WTC11 (cell line): ENCODE measurements at regions of chr17 and their contacts with region 1.

Region 1: DNA sequence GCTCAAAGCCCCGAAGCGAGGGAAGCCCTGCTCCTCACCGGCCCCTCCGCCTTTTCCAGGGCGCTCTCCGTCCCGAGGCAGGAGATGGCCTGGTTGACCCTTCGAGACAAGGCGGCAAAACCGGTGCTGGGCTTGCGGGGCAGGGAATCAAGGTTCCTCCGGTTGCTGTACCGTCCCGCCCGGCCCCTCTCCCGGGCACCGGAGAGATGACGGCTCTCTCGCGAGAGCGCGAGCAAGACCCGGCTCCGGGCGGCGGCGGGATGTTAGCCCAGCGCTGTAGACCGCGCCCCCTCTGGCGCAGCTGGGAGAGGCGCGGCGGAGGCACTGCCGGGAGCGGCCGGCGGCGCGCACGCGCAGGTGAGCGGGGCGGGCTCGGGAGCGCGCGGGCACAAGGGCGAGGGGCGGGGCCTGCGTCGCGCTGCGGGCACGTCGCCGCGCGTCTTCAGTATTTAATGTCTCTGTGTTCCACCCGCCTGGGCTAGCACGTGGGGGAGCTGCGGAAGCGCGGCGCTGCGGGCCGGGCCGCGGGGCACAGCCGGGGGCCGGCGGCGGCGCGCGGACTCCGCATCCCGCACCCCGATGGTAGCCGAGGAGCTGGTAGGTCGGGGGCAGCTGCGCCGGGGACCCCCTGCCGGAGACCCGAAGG is at the start of gene AKAP1:
- DNase-seq: peak; percentile 96
- ATAC-seq: peak; percentile 96
- H3K4me3 Mint-ChIP-seq: peak within 1 kb of the TSS; percentile 88
- H3K27ac Mint-ChIP-seq: peak within 1 kb of the TSS; percentile 98
- H3K4me1 Mint-ChIP-seq: peaks cover 53% of the 10 kb centered on the region
- H3K27me3 Mint-ChIP-seq: peaks cover 2% of the 10 kb centered on the region; the same call in 1 of the 2 replicates
- CTCF ChIP-seq: no peak
- total RNA-seq, gene AKAP1: 55.9 to 74.5 TPM (median 56.2 TPM) in 3 replicates

Region 2: DNA sequence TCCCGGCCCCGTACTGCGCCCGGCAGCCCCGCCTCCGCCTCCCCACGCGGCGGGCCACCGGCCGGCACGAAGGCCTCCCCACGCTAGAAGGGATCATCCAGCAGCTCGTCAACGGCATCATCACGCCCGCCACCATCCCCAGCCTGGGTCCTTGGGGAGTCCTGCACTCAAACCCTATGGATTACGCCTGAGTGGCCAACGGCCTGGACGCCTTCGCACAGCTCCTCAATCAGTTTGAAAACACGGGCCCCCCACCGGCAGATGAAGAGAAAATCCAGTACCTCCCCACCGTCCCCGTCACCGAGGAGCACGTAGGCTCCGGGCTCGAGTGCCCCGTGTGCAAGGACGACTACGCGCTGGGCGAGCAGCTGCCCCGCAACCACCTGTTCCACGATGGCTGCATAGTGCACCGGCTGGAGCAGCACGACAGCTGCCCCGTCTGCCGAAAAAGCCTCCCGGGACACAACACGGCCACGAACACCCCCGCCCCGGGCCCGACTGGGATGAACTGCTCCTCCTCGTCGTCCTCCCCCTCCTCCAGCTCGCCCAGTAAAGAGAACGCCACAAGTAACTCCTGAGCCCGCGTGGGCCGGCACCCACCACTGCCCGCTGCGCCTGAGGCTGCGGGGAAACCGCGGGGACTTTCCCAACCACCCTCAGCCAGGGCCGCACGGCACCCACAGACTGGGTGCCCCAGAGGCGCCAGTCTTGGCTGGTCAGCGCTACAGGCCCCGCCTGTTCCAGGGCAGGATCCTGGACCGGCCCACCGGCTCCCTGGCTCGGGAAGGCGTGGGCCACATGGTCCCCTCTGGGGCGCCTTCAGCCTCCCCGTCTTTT is 38.8 kb before region 1 on chr17:
- CTCF ChIA-PET with region 1: no interaction called
- POLR2A ChIA-PET with region 1: no interaction called
- DNase-seq: peak; percentile 36
- ATAC-seq: peak; percentile 50
- H3K4me3 Mint-ChIP-seq: no peak overlapping the region
- H3K27ac Mint-ChIP-seq: no peak overlapping the region
- H3K4me1 Mint-ChIP-seq: peaks cover 26% of the 10 kb centered on the region
- H3K27me3 Mint-ChIP-seq: no peaks in the 10 kb centered on the region
- CTCF ChIP-seq: no peak

Region 3: GRCh38 chr17:57071991-57072944 is 12.7 kb before region 1 on chr17:
- CTCF ChIA-PET with region 1: interaction called, 18 read pairs
- POLR2A ChIA-PET with region 1: no interaction called
- DNase-seq: no peak
- ATAC-seq: peak; percentile 46
- H3K4me3 Mint-ChIP-seq: peak overlapping the region; percentile 1; the same call in 1 of the 2 replicates
- H3K27ac Mint-ChIP-seq: peak overlapping the region; percentile 94
- H3K4me1 Mint-ChIP-seq: peaks cover 59% of the 10 kb centered on the region
- H3K27me3 Mint-ChIP-seq: no peaks in the 10 kb centered on the region
- CTCF ChIP-seq: no peak

Region 4: DNA sequence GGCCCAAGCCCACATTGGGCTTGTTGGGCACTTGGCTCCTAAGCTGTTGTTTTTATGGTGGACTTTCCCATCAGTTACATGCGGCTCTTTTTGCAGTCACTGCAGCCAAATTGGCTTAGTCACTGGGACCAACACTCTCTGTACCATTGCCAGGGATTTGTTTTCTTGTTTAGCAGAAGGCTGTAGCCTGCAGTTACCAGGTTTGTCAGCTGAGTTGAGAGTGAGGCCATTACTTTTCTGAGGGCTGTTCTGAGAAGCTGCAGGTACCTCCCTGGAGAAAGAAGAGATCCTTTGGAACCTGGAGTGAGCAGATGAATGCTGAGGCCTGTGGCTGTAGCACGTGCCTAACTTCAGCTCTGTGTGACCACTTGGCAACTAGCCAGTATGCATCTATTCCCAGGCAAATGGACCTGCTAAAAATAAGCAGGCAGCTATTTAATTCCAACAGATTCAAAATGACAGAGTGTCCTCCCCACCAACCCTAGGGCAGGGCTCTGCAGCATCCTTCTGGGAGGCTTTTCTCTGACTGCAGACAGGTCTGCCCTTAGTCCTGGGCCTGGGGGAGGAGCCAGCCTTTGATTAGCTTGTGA is 13.0 kb after region 1 on chr17:
- CTCF ChIA-PET with region 1: interaction called, 11 read pairs
- POLR2A ChIA-PET with region 1: no interaction called
- DNase-seq: no peak
- ATAC-seq: no peak
- H3K4me3 Mint-ChIP-seq: no peak overlapping the region
- H3K27ac Mint-ChIP-seq: 0 out of 2 replicates have a peak overlapping the region, but pooled peaks have one; percentile 19
- H3K4me1 Mint-ChIP-seq: peaks cover 84% of the 10 kb centered on the region
- H3K27me3 Mint-ChIP-seq: no peaks in the 10 kb centered on the region
- CTCF ChIP-seq: no peak